Activated T-helper 2 cell treated with anti-CD3 and anti-CD28 coated beads, Interferon-gamma antibody, Interleukin-2, Interleukin-4, amounts not matched to agents 10 μg/mL and 5 μg/mL and 100 μg/mL, durations not matched to agents 14 hours and 24 hours and 36 hours (primary cell): ENCODE measurements at regions of chr1 and their contacts with region 1.

Region 1: DNA sequence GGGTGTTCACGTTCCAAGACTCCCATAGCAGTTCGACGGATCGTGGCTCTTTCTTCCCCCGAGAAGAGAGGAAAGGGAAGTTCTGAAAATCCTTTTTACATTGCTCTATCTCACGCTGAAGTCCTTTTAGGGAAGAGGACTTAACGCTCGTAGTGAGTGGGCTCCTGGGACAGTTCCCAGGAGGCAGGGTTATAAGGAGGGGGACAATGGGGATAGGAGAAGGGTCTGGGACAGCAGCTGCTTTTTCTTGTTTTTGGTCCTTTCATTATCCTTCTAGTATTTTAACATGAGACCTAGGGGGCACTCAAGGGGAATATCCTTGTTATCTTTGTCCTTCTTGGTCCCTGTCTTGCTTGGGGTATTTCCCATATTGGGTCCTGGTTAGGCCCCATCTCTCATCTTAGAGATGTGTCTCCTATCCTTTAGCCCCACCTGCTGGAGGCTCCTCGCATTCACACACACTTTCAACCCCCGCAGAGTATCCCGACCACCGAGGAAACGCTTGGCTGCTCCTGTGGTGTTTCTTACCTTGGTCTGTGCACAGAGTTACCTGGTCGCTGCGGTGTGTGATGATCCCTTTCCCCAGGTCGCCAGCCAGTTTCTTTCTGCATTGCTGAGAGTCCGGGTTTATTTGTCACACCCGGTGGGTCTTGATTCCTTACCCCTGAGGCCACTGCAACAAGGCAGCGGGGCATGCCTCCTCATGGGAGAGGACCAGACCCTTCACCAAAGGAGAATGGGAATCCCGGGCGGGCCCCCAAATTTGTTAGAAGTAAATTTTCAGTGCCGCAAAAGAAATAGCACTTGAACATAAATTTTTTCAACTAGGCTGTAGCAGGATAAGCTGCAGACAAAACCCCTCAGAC is 29.7 kb downstream of the SCCPDH start:
- DNase-seq: peak; percentile 32
- H3K4me3 Mint-ChIP-seq: no peak overlapping the region
- H3K27ac Mint-ChIP-seq: no peak overlapping the region
- H3K4me1 Mint-ChIP-seq: no peaks in the 10 kb centered on the region
- H3K27me3 Mint-ChIP-seq: no peaks in the 10 kb centered on the region

Region 2: GRCh38 chr1:246658567-246658966 is 95.3 kb before region 1 on chr1:
- intact Hi-C with region 1: no loop called
- DNase-seq: no peak
- H3K4me3 Mint-ChIP-seq: no peak overlapping the region
- H3K27ac Mint-ChIP-seq: no peak overlapping the region
- H3K4me1 Mint-ChIP-seq: no peaks in the 10 kb centered on the region
- H3K27me3 Mint-ChIP-seq: no peaks in the 10 kb centered on the region

Region 3: GRCh38 chr1:246689409-246690008 is 64.4 kb before region 1 on chr1:
- intact Hi-C with region 1: loop called (anchors 1 kb)
- DNase-seq: peak; percentile 22
- H3K4me3 Mint-ChIP-seq: no peak overlapping the region
- H3K27ac Mint-ChIP-seq: no peak overlapping the region
- H3K4me1 Mint-ChIP-seq: no peaks in the 10 kb centered on the region
- H3K27me3 Mint-ChIP-seq: no peaks in the 10 kb centered on the region

Region 4: GRCh38 chr1:246709835-246710234 is 44.1 kb before region 1 on chr1:
- intact Hi-C with region 1: no loop called
- DNase-seq: no peak
- H3K4me3 Mint-ChIP-seq: no peak overlapping the region
- H3K27ac Mint-ChIP-seq: no peak overlapping the region
- H3K4me1 Mint-ChIP-seq: peaks cover 13% of the 10 kb centered on the region
- H3K27me3 Mint-ChIP-seq: peaks cover 24% of the 10 kb centered on the region